ENCODE measurements at regions of chr9 and their contacts with region 1.

Region 1: GRCh38 chr9:128296337-128297220 is 20.5 kb downstream of the SWI5 start:
- DNase-seq: no peak
- ATAC-seq: no peak

Region 2: DNA sequence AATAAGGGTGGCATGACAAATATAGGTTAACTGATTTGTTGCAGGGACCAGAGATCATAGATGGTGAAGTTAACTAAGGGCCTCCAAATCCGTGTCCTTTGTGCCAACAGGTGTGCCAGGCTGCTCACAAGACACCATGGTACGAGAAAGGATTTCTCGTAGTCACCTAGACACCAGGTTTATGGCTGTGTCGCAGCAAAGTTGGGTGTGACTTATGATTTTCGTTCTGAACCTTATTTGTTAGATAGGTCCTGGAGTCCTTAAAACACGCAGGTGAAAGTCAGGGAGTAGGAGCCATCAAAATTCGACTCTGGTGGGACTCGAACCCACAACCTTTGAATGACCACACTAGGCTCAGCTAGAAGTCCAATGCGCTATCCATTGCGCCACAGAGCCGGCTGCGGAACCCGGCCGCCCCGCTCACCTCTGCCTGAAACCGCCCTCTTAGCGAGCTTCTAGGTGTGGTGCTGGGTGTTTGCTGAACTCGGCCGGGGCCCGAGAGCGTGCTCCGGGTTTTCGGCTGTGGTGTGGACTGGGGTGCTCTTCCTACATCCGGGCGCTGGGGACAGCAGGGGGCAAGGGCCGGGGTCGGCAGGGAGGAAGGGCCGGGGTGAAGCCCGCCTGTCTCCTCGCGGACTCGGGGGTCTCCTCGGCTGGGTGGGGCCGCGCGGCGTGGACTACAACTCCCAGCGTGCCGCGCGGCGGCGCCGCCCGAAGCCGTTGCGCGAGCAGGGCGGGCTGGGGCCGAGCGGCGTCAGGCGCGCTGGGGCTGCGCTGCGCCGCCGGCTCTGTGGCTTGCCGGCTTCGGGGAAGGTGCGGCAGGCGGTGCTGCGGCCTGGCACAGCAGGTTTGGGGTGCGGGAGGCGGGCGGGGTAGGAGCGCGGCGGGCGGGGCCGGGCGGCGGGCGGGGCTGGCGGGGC is 43.5 kb after region 1 on chr9 and contains the start of gene SLC27A4:
- intact Hi-C with region 1: loop called in 1 of 2 experiments (anchors 5 kb)
- DNase-seq: peak; percentile 84
- ATAC-seq: peak; percentile 95 to 96
- total RNA-seq, gene SLC27A4: 17.6 to 21.7 TPM

Region 3: DNA sequence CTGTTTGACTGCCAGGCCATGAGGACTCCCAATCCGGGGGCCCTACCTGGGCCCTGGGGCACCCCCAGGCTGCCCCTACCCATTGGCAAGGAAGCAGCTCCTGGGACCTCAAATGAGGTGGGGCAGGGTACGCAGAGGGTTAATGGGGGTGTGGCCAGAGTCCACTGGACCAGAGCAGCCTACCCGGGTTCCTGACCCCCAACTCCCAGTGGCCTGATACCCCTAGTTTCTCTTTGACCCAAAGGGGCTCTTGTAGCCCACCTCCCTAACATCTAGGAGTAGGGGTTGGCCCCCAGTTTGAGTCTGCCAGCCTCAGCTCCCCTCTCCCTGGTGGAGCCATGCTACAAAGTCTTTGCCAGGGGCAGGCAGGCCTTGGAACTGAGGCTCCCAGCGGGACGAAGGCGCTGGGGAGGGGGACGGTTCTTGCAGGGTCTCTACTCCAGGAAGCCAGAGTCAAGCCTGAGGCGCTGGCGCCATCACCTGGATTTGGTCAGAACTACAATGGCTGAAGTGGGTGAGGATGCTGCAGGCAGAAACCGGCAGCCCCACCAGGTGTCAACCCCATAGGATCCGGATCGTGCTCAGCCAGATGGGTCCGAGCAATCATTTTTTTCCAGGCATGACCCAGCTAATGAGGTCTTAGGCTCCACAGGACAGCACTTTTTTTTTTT is 115.7 kb after region 1 on chr9:
- intact Hi-C with region 1: loop called in 1 of 2 experiments (anchors 10 kb)
- DNase-seq: no peak
- ATAC-seq: no peak

Region 4: DNA sequence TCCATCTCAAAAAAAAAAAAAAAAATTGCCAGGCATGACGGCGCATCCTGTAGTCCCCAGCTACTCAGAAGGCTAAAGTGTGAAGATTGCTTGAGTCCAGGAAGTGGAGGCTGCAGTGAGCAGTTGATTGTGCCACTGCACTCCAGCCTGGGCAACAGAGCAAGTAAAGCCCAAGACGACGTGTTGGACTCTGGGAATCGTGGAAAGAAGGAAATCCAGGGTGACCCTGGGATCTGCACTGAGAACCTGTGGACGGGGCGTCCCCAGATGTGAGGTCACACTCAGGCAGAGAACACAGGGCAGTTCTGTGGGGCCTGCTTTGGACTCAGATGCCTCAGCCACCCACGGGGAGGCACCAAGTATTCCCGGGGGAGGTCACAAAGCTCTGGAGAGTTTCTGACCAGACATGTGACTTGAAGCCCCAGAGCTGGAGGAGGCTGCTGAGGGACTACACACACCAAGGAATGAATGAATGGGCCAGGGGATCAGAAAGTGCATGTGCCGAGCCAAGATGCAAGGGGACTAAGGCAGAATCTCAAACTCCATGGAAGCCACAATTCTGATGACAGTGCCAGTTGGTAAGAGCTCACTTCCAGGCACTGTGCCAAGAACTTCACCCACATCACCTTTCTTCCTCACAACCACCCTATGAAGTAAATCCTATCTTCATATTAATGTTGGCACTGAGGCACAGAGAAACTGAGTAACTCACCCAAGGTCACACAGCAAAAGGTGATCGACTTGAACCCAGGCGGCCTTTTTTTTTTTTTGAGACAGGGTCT is 347.1 kb after region 1 on chr9:
- intact Hi-C with region 1: no loop called
- DNase-seq: no peak
- ATAC-seq: no peak

Measured in left cardiac atrium (tissue), 4 donors.